ENCODE measurements at regions of chr5 and their contacts with region 1.

Region 1: DNA sequence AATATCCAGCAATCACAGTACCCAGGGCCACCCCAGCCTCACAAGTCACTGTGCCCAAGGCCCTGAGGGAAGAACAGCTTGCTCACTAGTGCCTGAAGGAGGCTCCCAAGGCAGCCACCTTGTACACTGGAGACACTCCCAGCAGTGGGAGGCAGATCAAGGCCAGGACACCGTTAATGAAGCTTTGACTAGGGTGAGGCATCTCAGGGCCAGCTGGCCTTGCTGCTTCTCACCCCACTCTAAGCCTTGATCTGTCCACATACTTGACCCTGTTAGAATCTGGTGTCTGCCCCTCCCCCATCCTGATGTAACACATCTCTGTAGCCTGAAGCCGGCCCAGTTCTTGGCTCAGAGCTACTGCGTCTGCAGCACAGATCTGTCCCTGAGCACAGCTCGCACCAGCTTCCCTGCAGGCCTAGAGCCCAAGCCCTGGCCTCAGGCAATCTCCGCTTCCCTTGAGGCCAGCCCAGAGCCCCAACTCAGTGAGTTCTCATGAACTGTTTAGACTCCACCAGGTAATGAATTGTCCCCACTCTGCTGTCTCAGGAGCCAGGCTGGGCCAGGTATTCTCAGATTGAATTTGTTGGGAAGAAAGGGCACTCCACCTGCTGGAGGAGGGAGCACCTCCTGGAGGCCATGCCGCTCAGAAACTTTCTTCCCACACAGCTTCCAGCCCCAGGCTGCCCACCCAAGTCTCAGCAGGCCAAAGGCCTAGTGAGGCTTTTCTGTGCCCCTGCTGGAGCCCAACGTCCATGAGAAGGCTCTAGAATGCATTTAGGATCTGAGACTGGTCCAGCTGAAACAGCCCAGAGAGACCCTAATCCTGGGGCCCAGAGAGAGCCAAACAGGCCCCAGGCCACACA is 13.5 kb upstream of the JADE2 start:
- DNase-seq: peak; percentile 95
- H3K4me3 Mint-ChIP-seq: peak overlapping the region; percentile 48
- H3K27ac Mint-ChIP-seq: peak overlapping the region; percentile 82
- H3K4me1 Mint-ChIP-seq: peaks cover 54% of the 10 kb centered on the region
- H3K27me3 Mint-ChIP-seq: no peaks in the 10 kb centered on the region
- CTCF ChIP-seq: peak; percentile 61

Region 2: GRCh38 chr5:134304311-134304710 is 207.7 kb before region 1 on chr5:
- CTCF ChIA-PET with region 1: interaction called, 13 read pairs
- POLR2A ChIA-PET with region 1: interaction called, 3 read pairs
- intact Hi-C with region 1: loop called (anchors 1 kb)
- DNase-seq: no peak
- H3K4me3 Mint-ChIP-seq: no peak overlapping the region
- H3K27ac Mint-ChIP-seq: no peak overlapping the region
- H3K4me1 Mint-ChIP-seq: no peaks in the 10 kb centered on the region
- H3K27me3 Mint-ChIP-seq: no peaks in the 10 kb centered on the region
- CTCF ChIP-seq: no peak

Region 3: GRCh38 chr5:134406390-134406789 is 105.6 kb before region 1 on chr5:
- CTCF ChIA-PET with region 1: interaction called, 57 read pairs
- POLR2A ChIA-PET with region 1: interaction called, 76 read pairs
- intact Hi-C with region 1: loop called (anchors 1 kb)
- DNase-seq: no peak
- H3K4me3 Mint-ChIP-seq: no peak overlapping the region
- H3K27ac Mint-ChIP-seq: no peak overlapping the region
- H3K4me1 Mint-ChIP-seq: peaks cover 27% of the 10 kb centered on the region
- H3K27me3 Mint-ChIP-seq: no peaks in the 10 kb centered on the region
- CTCF ChIP-seq: no peak

Region 4: DNA sequence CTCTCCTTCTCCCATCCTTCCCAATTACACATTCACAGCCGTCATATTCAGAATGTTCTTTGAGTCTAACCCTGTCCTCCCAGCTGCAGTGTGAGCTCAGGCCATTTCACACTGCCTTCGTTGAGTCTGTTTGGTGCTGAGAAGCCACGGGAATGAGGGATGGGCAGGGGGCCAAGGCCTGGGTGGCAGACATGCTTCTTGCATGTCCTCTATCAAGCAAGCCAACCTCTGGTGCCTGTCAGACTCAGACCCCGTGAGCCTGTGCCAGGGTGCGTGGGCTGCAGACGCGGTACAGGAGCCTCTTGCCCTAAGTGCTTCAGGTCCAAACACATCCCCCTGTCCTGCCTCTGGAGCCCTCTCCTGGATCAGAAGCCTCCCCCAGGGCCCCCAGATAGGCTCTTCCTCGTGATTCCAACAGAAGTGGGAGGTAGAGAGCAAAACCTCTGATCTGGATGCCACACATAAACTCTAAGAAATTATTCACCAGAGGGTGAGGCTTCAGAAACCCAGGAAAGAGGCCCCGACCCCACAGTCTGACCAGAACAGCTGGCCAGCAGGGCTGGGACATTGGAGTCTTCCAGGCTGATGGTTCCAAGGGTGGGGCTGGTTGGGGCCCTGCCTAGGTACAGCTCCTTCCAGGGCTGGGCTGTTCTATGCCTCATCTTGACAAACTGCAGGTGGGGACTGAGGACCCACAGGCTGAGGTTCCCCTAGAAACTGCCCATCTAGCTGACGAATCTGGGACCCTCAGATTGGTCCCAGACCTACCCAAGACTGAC is 53.6 kb before region 1 on chr5:
- CTCF ChIA-PET with region 1: interaction called, 16 read pairs
- POLR2A ChIA-PET with region 1: interaction called, 298 read pairs
- intact Hi-C with region 1: no loop called
- DNase-seq: peak; percentile 52
- H3K4me3 Mint-ChIP-seq: no peak overlapping the region
- H3K27ac Mint-ChIP-seq: peak overlapping the region; percentile 68
- H3K4me1 Mint-ChIP-seq: peaks cover 37% of the 10 kb centered on the region
- H3K27me3 Mint-ChIP-seq: no peaks in the 10 kb centered on the region
- CTCF ChIP-seq: no peak

Region 5: GRCh38 chr5:134493461-134494055 is 18.5 kb before region 1 on chr5:
- CTCF ChIA-PET with region 1: interaction called, 22 read pairs
- POLR2A ChIA-PET with region 1: interaction called, 7 read pairs
- intact Hi-C with region 1: no loop called
- DNase-seq: no peak
- H3K4me3 Mint-ChIP-seq: no peak overlapping the region
- H3K27ac Mint-ChIP-seq: no peak overlapping the region
- H3K4me1 Mint-ChIP-seq: no peaks in the 10 kb centered on the region
- H3K27me3 Mint-ChIP-seq: no peaks in the 10 kb centered on the region
- CTCF ChIP-seq: no peak